Common myeloid progenitor, CD34-positive (primary cell): ENCODE measurements at regions of chr14 and their contacts with region 1.

Region 1: GRCh38 chr14:44990533-44990932 is 28.5 kb downstream of the TOGARAM1 start:
- DNase-seq: no peak
- H3K4me3 ChIP-seq: no peak overlapping the region
- H3K27ac ChIP-seq: no peak overlapping the region
- H3K4me1 ChIP-seq: peaks cover 5 to 15% (median 8%) of the 10 kb centered on the region in 4 experiments
- H3K27me3 ChIP-seq: no peaks in the 10 kb centered on the region

Region 2: DNA sequence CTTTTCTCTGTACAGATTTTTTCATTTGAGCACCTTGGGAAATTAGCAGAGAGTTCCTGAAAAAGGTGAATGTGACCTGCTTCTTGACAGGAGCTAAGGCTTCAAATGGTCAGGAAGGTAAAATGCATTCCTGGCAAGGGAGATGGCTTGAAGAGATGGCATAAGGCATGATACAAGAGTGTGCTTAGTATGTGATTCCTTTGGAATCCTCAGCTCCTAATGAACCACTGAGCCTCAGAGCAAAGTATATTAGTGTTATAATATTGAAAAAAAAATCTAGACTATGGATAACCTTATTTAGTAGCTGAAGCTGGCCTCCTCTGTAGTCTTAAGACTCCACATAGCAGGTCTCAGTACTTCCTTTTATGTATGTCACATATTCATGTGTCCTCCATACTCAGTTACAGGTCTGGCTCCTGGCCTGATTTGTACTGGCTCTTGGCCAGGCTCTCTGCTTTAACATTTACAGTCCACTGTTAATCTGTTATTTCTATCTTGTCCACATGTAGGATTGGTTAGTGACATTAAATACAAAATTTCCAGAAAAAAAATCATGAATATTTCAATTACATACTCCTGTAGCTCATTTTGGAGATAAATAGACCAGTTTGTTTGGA is 10.7 kb before region 1 on chr14:
- CTCF ChIA-PET with region 1: interaction called, 11 read pairs
- POLR2A ChIA-PET with region 1: no interaction called
- DNase-seq: no peak
- H3K4me3 ChIP-seq: no peak overlapping the region
- H3K27ac ChIP-seq: no peak overlapping the region
- H3K4me1 ChIP-seq: no peaks in the 10 kb centered on the region
- H3K27me3 ChIP-seq: no peaks in the 10 kb centered on the region